Adrenal gland (tissue), 19 donors: ENCODE measurements at regions of chr2 and their contacts with region 1.

Region 1: GRCh38 chr2:97806738-97807618 is 93.6 kb downstream of the ZAP70 start:
- DNase-seq: peak; percentile 77 to 95 (median 87)
- H3K4me3 ChIP-seq: no peak overlapping the region
- H3K27ac ChIP-seq: no peak overlapping the region
- H3K4me1 ChIP-seq: no peaks in the 10 kb centered on the region
- H3K27me3 ChIP-seq: no peaks in the 10 kb centered on the region
- CTCF ChIP-seq: peak; percentile 87 to 98 (median 89)
- POLR2A ChIP-seq: no peak

Region 2: DNA sequence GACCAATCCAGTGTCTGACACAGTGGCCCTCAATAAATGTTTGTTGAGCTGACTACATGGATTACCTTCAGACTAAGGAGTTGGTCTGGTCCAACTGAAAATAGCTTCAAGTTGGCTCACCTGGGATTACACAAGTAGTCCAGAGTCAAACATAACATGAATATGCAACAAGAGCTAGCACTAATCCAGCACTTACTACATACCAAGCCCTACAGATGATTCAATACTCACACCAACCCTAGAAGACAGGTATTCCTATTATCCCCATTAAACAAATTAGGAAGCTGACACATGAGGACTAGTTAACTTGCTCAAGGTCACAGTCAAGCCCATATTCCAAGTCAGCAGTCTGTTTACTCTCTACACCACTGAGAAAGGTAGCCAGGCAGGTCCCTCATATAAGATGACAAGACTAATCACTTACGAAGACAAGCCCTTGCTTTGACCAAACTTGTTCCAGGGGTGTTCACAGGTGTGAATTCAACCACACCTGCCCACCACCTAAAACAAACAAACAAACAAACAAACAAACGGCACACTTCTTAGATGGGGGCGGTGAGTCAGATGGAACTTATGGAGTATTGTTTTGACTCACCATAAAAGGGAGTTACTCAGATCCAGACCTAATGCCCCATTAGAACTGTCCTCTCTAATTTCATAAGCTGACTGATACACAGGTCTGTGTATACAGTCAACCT is 159.7 kb after region 1 on chr2:
- intact Hi-C with region 1: no loop called
- DNase-seq: no peak
- H3K4me3 ChIP-seq: no peak overlapping the region
- H3K27ac ChIP-seq: peak overlapping the region in 1 of 5 donors; percentile 4
- H3K4me1 ChIP-seq: peaks cover 24 to 57% of the 10 kb centered on the region in 2 donors
- H3K27me3 ChIP-seq: no peaks in the 10 kb centered on the region
- CTCF ChIP-seq: no peak
- POLR2A ChIP-seq: no peak

Region 3: DNA sequence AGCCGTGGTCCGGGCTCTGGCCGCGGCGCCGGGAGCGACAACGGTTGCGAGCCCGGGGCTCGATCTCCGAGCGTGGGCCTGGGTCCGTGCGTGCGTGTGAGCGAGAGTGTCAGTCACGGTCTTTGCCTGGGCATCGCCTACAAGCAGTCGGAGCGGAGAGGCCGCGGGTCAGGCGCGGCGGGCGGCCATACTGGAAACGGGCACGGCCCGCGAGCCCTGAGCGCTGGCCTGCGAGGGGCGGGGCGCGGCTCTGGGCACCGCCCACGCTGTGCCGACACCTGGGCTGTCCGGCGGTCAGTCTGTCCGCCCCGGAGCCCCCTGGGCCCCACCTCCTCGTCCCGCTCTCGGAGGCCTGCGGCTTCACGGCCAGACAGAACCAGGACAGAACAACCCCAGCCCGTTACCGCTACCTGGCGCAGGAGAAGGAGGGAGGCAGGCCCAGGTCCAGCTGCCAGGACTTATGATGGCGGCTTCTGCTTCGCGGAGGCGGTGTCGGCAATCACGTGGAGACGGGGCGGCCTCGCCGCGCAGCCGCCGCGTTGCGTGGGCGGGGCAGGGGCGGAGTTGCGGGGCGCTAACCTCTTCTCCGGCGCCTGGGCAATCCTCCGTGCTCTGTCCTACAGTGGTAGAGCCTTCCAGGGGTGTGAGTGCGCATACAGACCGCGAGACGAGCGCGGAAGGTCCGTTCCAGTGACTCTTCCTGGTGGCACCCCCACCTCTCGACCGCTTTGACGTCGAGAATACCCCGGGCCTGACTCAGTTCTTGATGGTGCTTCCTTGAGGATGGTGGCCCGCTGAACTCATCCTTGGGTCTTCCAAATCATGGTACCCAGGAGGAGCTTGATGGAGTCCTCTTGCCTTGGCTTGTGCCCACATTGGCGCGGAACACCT is 189.0 kb after region 1 on chr2 and contains the start of gene TMEM131:
- intact Hi-C with region 1: loop called in 1 of 2 experiments (anchors 5 kb)
- DNase-seq: peak; percentile 93 to 97 (median 95)
- H3K4me3 ChIP-seq: peak within 1 kb of the TSS; percentile 33 to 99 (median 62)
- H3K27ac ChIP-seq: peak within 1 kb of the TSS; percentile 82 to 98 (median 98)
- H3K4me1 ChIP-seq: peaks cover 13 to 40% of the 10 kb centered on the region in 2 donors
- H3K27me3 ChIP-seq: no peaks in the 10 kb centered on the region
- CTCF ChIP-seq: no peak
- POLR2A ChIP-seq: peak; percentile 49 to 70
- total RNA-seq, gene TMEM131: 19.5 to 57.5 (median 34.5) TPM

Region 4: GRCh38 chr2:98175811-98176210 is 368.8 kb after region 1 on chr2:
- intact Hi-C with region 1: loop called in 1 of 2 experiments (anchors 10 kb)
- DNase-seq: no peak
- H3K4me3 ChIP-seq: no peak overlapping the region
- H3K27ac ChIP-seq: no peak overlapping the region
- H3K4me1 ChIP-seq: no peaks in the 10 kb centered on the region
- H3K27me3 ChIP-seq: peaks cover 6% of the 10 kb centered on the region
- CTCF ChIP-seq: no peak
- POLR2A ChIP-seq: no peak

Region 5: GRCh38 chr2:98385050-98385699 is 578.2 kb after region 1 on chr2:
- intact Hi-C with region 1: loop called (anchors 2 to 5 kb)
- DNase-seq: peak; percentile 75 to 89 (median 83)
- H3K4me3 ChIP-seq: no peak overlapping the region
- H3K27ac ChIP-seq: no peak overlapping the region
- H3K4me1 ChIP-seq: no peaks in the 10 kb centered on the region
- H3K27me3 ChIP-seq: no peaks in the 10 kb centered on the region
- CTCF ChIP-seq: peak; percentile 93 to 99 (median 99)
- POLR2A ChIP-seq: no peak